ENCODE measurements at regions of chr9 and their contacts with region 1.

Region 1: GRCh38 chr9:74810200-74810599 is 77.5 kb downstream of the TRPM6 start:
- DNase-seq: no peak
- H3K4me3 Mint-ChIP-seq: no peak overlapping the region
- H3K27ac Mint-ChIP-seq: no peak overlapping the region
- H3K4me1 Mint-ChIP-seq: no peaks in the 10 kb centered on the region
- H3K27me3 Mint-ChIP-seq: peaks cover 19% of the 10 kb centered on the region

Region 2: DNA sequence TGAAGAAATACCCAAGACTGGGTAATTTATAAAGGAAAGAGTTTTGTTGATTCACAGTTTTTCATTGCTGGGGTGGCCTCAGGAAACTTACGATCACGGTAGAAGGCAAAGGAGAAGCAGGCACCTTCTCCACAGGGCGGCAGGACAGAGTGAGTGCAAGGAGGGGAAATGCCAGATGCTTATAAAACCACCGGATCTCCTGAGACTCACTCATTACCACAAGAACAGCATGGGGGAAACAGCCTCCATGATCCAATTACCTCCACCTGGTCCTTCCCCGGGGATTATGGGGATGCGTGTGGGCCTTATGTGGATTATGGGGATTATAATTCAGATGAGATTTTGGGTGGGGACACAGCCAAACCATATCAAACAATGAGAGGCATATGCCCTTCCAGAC is 331.6 kb before region 1 on chr9:
- intact Hi-C with region 1: no loop called
- DNase-seq: no peak
- H3K4me3 Mint-ChIP-seq: no peak overlapping the region
- H3K27ac Mint-ChIP-seq: no peak overlapping the region
- H3K4me1 Mint-ChIP-seq: no peaks in the 10 kb centered on the region
- H3K27me3 Mint-ChIP-seq: no peaks in the 10 kb centered on the region

Region 3: GRCh38 chr9:74795803-74796202 is 14.4 kb before region 1 on chr9:
- intact Hi-C with region 1: no loop called
- DNase-seq: no peak
- H3K4me3 Mint-ChIP-seq: no peak overlapping the region
- H3K27ac Mint-ChIP-seq: no peak overlapping the region
- H3K4me1 Mint-ChIP-seq: no peaks in the 10 kb centered on the region
- H3K27me3 Mint-ChIP-seq: peaks cover 7% of the 10 kb centered on the region

Region 4: DNA sequence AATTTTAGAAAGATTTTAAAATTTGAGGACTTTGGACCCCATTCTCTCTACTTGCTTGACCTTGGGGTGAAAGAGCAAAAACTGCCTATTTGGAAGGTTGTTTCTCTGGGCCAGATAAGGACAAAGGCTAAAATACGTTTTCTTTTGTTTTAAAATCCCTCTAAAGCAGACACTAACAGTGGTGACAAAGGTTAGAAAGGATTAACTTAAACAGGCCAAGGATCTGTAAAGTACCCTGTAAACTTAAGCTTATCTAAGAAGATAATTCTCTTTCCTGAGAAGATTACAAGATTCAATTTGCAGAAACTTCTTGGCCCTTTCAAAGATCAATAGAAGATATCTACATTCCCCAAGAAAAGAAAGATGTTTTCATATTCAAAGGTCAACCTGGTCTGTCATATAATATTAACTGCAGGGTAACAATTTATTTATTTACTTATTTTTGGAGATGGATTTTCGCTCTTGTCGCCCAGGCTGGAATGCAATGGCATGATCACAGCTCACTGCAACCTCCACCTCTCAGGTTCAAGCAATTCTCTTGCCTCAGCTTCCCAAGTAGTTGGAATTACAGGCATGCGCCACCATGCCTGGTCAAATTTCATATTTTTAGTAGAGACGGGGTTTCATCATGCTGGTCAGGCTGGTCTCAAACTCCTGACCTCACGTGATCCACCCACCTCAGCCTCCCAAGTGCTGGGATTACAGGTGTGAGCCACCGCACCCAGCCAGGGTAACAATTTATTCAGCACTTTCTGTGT is 65.6 kb after region 1 on chr9:
- intact Hi-C with region 1: loop called (anchors 10 kb)
- DNase-seq: no peak
- H3K4me3 Mint-ChIP-seq: no peak overlapping the region
- H3K27ac Mint-ChIP-seq: no peak overlapping the region
- H3K4me1 Mint-ChIP-seq: no peaks in the 10 kb centered on the region
- H3K27me3 Mint-ChIP-seq: peaks cover 5% of the 10 kb centered on the region

Measured in activated T-helper 1 cell treated with anti-CD3 and anti-CD28 coated beads, Interleukin-12 subunit alpha, Interleukin-12 subunit beta, Interleukin-2, Interleukin-4 antibody, amounts not matched to agents 30 ng/mL and 10 ng/mL and 1 ng/mL, durations not matched to agents 14 hours and 24 hours and 36 hours (primary cell).